Activated naive CD4-positive, alpha-beta T cell treated with anti-CD3 and anti-CD28 coated beads for 36 hours (primary cell): ENCODE measurements at regions of chrX and their contacts with region 1.

Region 1: DNA sequence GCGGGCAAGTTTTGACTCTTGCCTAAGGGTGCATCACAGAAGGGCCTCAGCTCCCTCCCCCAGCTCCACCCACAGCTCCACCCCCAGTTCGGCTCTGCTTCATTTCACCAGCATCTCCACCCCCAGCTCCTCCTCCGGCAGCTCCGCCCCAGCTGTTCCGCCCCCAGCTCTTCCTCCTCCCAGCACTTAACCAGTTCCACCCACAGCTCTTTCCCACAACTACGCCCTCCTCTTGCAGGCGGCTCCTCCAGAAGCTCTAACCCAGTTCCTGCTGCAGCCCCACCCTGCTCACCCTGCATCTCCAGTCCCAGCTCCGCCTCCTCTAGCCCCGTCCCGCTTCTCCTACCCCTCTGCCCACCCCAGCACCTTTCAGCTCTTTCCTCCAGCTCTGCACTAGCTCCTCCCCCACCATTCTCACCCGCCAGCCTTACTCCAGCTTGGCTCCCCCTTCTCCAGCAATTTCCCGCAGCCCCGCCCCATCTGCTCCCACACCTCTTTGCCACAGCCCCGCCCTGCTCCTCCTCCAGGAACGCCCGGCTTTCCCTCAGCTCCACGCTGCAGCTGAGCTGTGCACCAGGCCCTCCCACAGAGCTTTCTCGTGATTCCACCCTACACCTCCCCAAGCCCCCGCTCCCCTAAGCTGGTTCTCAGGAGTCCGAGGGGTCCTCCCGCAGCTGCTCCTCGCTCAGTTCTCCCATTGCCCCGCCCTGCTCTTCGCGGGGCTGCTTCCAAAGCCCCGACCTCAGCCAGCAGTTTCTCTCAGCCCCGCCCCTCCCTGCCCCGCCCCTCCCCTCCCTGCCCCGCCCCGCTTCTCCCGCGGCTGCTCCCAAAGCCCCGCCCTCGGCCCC is 1.3 kb upstream of the EOLA1 start:
- DNase-seq: peak; percentile 92
- H3K4me3 Mint-ChIP-seq: peak overlapping the region; percentile 79
- H3K27ac Mint-ChIP-seq: peak overlapping the region; percentile 73
- H3K4me1 Mint-ChIP-seq: peaks cover 2% of the 10 kb centered on the region
- H3K27me3 Mint-ChIP-seq: no peaks in the 10 kb centered on the region

Region 2: GRCh38 chrX:147911192-147912022 is 1628.1 kb before region 1 on chrX and contains the start of gene FMR1:
- CTCF ChIA-PET with region 1: no interaction called
- intact Hi-C with region 1: loop called (anchors 1 kb)
- DNase-seq: peak; percentile 94
- H3K4me3 Mint-ChIP-seq: peak within 1 kb of the TSS; percentile 93
- H3K27ac Mint-ChIP-seq: peak within 1 kb of the TSS; percentile 94
- H3K4me1 Mint-ChIP-seq: peaks cover 24% of the 10 kb centered on the region
- H3K27me3 Mint-ChIP-seq: no peaks in the 10 kb centered on the region
- total RNA-seq, gene FMR1: 24.5 to 25.7 TPM

Region 3: DNA sequence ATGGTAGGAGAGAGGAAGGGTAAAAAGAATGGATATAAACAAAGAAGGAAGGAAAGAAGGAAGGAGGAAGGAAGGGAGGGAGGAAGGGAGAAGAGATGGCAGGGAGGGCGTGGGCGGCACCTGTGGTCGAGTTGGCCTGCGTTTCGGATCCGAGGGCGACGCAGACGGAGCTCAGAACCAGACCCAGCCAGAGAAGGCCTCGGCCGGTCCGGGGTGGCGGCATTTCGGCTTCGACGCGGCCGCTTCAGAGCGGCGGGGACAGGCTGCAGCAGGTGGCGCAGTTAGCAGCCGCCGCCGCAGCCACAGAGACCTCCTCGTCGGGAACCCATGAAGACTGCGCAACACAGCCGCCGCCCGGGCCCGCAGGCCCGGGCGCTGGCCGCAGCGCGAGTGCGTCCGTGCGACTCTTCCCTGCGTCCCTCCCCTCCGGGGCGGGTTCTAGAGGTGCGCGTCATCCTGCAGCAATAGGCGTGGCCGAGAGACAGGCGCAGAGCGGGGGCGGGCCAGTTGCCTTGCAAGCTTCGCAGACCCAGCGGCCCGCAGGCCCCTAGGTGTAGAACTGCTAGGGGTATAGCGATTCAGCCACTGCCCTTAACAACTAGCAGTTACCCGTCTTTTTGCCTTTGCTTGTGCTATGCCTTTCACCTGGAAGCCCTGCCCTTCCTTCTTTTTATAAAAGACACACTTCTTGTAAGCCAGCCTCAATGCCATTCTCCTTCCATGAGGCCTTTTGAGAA is 34.4 kb before region 1 on chrX and contains the start of gene IDS:
- CTCF ChIA-PET with region 1: interaction called, 3 read pairs
- intact Hi-C with region 1: loop called (anchors 1 kb)
- DNase-seq: peak; percentile 89
- H3K4me3 Mint-ChIP-seq: peak within 1 kb of the TSS; percentile 86
- H3K27ac Mint-ChIP-seq: peak within 1 kb of the TSS; percentile 93
- H3K4me1 Mint-ChIP-seq: peaks cover 26% of the 10 kb centered on the region
- H3K27me3 Mint-ChIP-seq: no peaks in the 10 kb centered on the region
- total RNA-seq, gene IDS: 39.9 to 43.1 TPM

Region 4: DNA sequence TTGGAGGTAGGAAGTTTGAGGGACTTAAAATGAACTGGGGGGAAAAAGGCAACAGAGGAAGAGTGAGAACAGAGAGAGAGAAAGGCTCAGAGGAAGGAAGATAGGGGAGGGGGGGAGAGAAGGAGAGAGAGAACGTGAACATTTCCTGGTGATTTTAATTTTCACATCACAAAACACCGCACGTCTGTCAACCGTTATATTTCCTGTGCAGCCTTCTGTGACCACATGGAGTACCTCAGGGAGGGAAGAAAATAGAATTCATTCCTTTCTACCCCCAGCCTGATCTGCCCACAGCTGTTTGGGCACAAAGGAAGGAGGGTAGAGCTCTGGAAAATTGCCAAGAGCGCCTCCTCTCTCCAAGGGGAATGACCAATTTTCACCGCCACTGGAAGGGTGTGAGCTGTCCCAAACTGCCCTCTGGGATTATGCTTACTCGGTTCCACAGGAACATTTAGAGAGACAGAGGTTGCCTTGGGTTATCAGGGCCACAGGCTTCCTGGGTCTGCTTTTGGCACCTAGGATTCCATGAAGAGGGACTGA is 687.9 kb after region 1 on chrX:
- CTCF ChIA-PET with region 1: no interaction called
- intact Hi-C with region 1: no loop called
- DNase-seq: no peak
- H3K4me3 Mint-ChIP-seq: no peak overlapping the region
- H3K27ac Mint-ChIP-seq: no peak overlapping the region
- H3K4me1 Mint-ChIP-seq: no peaks in the 10 kb centered on the region
- H3K27me3 Mint-ChIP-seq: no peaks in the 10 kb centered on the region

Region 5: DNA sequence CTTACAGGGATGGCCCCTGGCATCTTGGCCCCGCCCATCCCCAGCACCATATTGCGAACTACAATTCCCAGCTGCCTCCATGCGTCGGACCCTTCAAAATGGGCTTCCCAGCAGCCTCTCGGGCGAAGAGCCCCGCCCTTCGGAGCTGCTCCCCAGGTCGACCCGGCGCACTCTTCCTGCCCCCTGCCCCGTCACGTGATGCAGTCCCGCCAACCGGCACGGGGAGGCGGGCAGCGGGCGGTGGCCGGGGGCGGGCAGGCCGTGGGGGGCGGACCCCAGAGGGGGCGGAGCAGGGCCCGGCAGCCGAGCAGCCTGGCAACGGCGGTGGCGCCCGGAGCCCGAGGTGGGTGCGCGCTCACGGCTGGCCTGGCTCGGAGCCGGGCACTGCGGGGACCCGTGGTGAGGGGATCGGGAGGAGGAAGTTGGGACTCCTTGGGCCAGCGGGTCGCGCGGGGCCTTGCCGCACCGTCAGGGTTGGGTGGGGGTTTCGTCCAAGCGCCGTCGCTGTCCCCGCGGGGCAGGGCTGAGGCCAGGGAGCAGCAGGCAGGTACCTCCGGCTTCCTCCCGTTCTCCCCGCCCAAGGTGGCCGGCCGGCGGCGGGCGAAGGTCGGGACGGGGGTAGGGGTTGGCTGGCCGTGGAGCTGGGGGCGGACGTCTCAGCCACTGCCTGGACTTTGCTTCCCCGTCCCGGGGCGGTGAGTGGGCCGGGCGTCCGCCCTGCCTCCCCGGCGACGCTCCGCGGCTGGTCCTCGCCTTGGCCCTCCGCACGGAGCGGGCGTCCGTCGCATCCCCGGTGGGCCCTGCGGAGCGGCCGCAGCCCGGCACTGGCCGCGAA is 1029.0 kb after region 1 on chrX and contains the start of gene MTM1:
- CTCF ChIA-PET with region 1: no interaction called
- intact Hi-C with region 1: loop called (anchors 5 kb)
- DNase-seq: peak; percentile 93
- H3K4me3 Mint-ChIP-seq: peak within 1 kb of the TSS; percentile 78
- H3K27ac Mint-ChIP-seq: peak within 1 kb of the TSS; percentile 97
- H3K4me1 Mint-ChIP-seq: peaks cover 32% of the 10 kb centered on the region
- H3K27me3 Mint-ChIP-seq: no peaks in the 10 kb centered on the region
- total RNA-seq, gene MTM1: 17.8 to 19.2 TPM